ENCODE measurements at regions of chr22 and their contacts with region 1.

Region 1: GRCh38 chr22:41780746-41781505 is 19.6 kb upstream of the CCDC134 start:
- DNase-seq: peak; percentile 98
- ATAC-seq: peak; percentile 94
- H3K4me3 Mint-ChIP-seq: peak overlapping the region; percentile 81
- H3K27ac Mint-ChIP-seq: peak overlapping the region; percentile 99
- H3K4me1 Mint-ChIP-seq: peaks cover 39% of the 10 kb centered on the region
- H3K27me3 Mint-ChIP-seq: no peaks in the 10 kb centered on the region
- CTCF ChIP-seq: no peak

Region 2: GRCh38 chr22:41656556-41656955 is 124.4 kb before region 1 on chr22:
- CTCF ChIA-PET with region 1: no interaction called
- POLR2A ChIA-PET with region 1: no interaction called
- intact Hi-C with region 1: no loop called
- DNase-seq: no peak
- ATAC-seq: no peak
- H3K4me3 Mint-ChIP-seq: no peak overlapping the region
- H3K27ac Mint-ChIP-seq: no peak overlapping the region
- H3K4me1 Mint-ChIP-seq: no peaks in the 10 kb centered on the region
- H3K27me3 Mint-ChIP-seq: no peaks in the 10 kb centered on the region
- CTCF ChIP-seq: no peak

Region 3: DNA sequence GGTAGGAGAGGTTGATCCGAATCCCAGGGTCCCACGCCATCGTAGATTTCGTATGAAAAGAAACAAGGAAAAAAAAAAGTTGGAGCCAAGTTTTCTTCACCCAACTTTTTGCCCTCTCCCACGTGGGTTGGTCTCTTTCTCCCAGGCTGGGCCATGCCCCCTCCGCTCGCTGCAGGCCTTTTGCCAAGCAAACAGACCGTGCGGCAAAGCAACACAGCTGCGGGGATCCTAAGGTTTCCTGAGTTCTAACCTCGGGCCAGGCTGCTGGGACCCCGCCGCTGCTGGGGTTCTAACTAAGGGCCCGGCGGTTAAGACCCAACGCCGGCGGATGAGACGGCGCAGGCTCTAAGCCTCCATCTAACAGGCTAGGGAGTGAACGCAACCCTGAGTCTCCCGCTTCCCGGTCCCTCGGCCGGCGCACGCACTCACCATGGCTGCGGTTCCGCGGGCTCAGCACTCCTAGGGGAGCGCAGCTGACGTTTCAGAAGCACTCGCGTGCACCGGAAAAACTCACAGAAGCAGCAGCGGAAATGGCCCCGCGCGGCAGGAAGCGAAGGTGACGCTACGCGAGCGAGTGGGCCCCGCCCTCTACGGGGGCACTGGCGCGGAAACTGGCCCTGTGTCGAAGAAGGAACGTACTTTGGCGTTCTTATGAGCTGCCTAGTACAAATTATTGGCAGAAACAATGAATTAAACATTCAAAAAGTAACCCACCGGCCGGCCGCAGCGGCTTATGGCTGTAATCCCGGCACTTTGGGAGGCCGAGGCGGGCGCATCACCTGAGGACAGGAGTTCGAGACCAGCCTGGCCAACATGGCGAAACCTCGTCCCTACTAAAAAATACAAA is 92.3 kb before region 1 on chr22 and contains the start of gene SNU13:
- CTCF ChIA-PET with region 1: no interaction called
- POLR2A ChIA-PET with region 1: interaction called, 4 read pairs
- intact Hi-C with region 1: loop called (anchors 5 kb)
- DNase-seq: peak; percentile 95
- ATAC-seq: peak; percentile 95
- H3K4me3 Mint-ChIP-seq: peak within 1 kb of the TSS; percentile 91
- H3K27ac Mint-ChIP-seq: peak within 1 kb of the TSS; percentile 95
- H3K4me1 Mint-ChIP-seq: peaks cover 26% of the 10 kb centered on the region
- H3K27me3 Mint-ChIP-seq: no peaks in the 10 kb centered on the region
- CTCF ChIP-seq: no peak
- total RNA-seq, gene SNU13: 275 to 299 TPM

Measured in activated CD8-positive, alpha-beta T cell treated with anti-CD3 and anti-CD28 coated beads for 36 hours (primary cell).